Vagina (tissue), 2 donors: ENCODE measurements at regions of chr5 and their contacts with region 1.

Region 1: GRCh38 chr5:103589776-103590175 is 27.2 kb upstream of the NUDT12 start:
- DNase-seq: no peak
- H3K4me3 ChIP-seq: no peak overlapping the region
- H3K27ac ChIP-seq: no peak overlapping the region
- H3K4me1 ChIP-seq: no peaks in the 10 kb centered on the region
- H3K27me3 ChIP-seq: no peaks in the 10 kb centered on the region
- CTCF ChIP-seq: no peak
- POLR2A ChIP-seq: no peak

Region 2: GRCh38 chr5:102341681-102342288 is 1248.0 kb before region 1 on chr5:
- intact Hi-C with region 1: loop called (anchors 5 kb)
- DNase-seq: no peak
- H3K4me3 ChIP-seq: no peak overlapping the region
- H3K27ac ChIP-seq: no peak overlapping the region
- H3K4me1 ChIP-seq: no peaks in the 10 kb centered on the region
- H3K27me3 ChIP-seq: no peaks in the 10 kb centered on the region
- CTCF ChIP-seq: no peak
- POLR2A ChIP-seq: no peak

Region 3: GRCh38 chr5:102481054-102481715 is 1108.6 kb before region 1 on chr5:
- intact Hi-C with region 1: no loop called
- DNase-seq: no peak
- H3K4me3 ChIP-seq: no peak overlapping the region
- H3K27ac ChIP-seq: no peak overlapping the region
- H3K4me1 ChIP-seq: no peaks in the 10 kb centered on the region
- H3K27me3 ChIP-seq: no peaks in the 10 kb centered on the region
- CTCF ChIP-seq: no peak
- POLR2A ChIP-seq: no peak